T-cell (primary cell): ENCODE measurements at regions of chr6 and their contacts with region 1.

Region 1: GRCh38 chr6:42443312-42444060 is 8.2 kb downstream of the TRERF1 start:
- DNase-seq: no peak
- ATAC-seq: peak in 2 of 4 experiments; percentile 25 to 55
- H3K4me3 ChIP-seq: peak overlapping the region in 1 of 2 donors; percentile 29
- H3K4me3 Mint-ChIP-seq: peak overlapping the region; percentile 41 to 62 (median 55)
- H3K27ac ChIP-seq: no peak overlapping the region
- H3K27ac Mint-ChIP-seq: peak overlapping the region; percentile 55 to 90
- H3K4me1 ChIP-seq: peaks cover 9 to 53% of the 10 kb centered on the region in 2 experiments
- H3K4me1 Mint-ChIP-seq: peaks cover 86 to 95% (median 94%) of the 10 kb centered on the region in 3 donors
- H3K27me3 ChIP-seq: no peaks in the 10 kb centered on the region
- H3K27me3 Mint-ChIP-seq: no peaks in the 10 kb centered on the region

Region 2: GRCh38 chr6:42417641-42418112 is 25.8 kb before region 1 on chr6:
- CTCF ChIA-PET with region 1: interaction called in 1 of 2 experiments, 4 read pairs
- POLR2A ChIA-PET with region 1: interaction called in 1 of 2 experiments, 10 read pairs
- DNase-seq: peak in 34 of 35 experiments; percentile 17 to 74 (median 58)
- ATAC-seq: peak; percentile 88 to 91 (median 90)
- H3K4me3 ChIP-seq: no peak overlapping the region
- H3K4me3 Mint-ChIP-seq: peak overlapping the region; percentile 18 to 62 (median 54)
- H3K27ac ChIP-seq: no peak overlapping the region
- H3K27ac Mint-ChIP-seq: peak overlapping the region; percentile 80 to 85
- H3K4me1 ChIP-seq: peaks cover 10 to 36% of the 10 kb centered on the region in 2 experiments
- H3K4me1 Mint-ChIP-seq: peaks cover 74 to 84% (median 83%) of the 10 kb centered on the region in 3 donors
- H3K27me3 ChIP-seq: no peaks in the 10 kb centered on the region
- H3K27me3 Mint-ChIP-seq: no peaks in the 10 kb centered on the region

Region 3: GRCh38 chr6:42532038-42532669 is 88.7 kb after region 1 on chr6:
- CTCF ChIA-PET with region 1: no interaction called
- POLR2A ChIA-PET with region 1: no interaction called
- DNase-seq: peak in 9 of 35 experiments; percentile 3 to 70 (median 11)
- ATAC-seq: peak in 1 of 4 experiments; percentile 54
- H3K4me3 ChIP-seq: no peak overlapping the region
- H3K4me3 Mint-ChIP-seq: no peak overlapping the region
- H3K27ac ChIP-seq: no peak overlapping the region
- H3K27ac Mint-ChIP-seq: no peak overlapping the region
- H3K4me1 ChIP-seq: no peaks in the 10 kb centered on the region
- H3K4me1 Mint-ChIP-seq: no peaks in the 10 kb centered on the region
- H3K27me3 ChIP-seq: no peaks in the 10 kb centered on the region
- H3K27me3 Mint-ChIP-seq: no peaks in the 10 kb centered on the region